Naive thymus-derived CD4-positive, alpha-beta T cell (primary cell): ENCODE measurements at regions of chr10 and their contacts with region 1.

Region 1: GRCh38 chr10:62528441-62528840 is 154.3 kb downstream of the ZNF365 start:
- DNase-seq: peak in 7 of 9 donors; percentile 42 to 83 (median 78)
- ATAC-seq: peak; percentile 95
- H3K4me3 ChIP-seq: no peak overlapping the region
- H3K4me3 Mint-ChIP-seq: peak overlapping the region; percentile 0 to 78 (median 70)
- H3K27ac ChIP-seq: peak overlapping the region; percentile 44
- H3K27ac Mint-ChIP-seq: peak overlapping the region; percentile 47 to 86 (median 75)
- H3K4me1 ChIP-seq: peaks cover 24 to 39% of the 10 kb centered on the region in 2 donors
- H3K4me1 Mint-ChIP-seq: peaks cover 32 to 49% (median 43%) of the 10 kb centered on the region in 7 donors
- H3K27me3 ChIP-seq: no peaks in the 10 kb centered on the region
- H3K27me3 Mint-ChIP-seq: peaks cover 0 to 15% (median 0%) of the 10 kb centered on the region in 5 donors

Region 2: DNA sequence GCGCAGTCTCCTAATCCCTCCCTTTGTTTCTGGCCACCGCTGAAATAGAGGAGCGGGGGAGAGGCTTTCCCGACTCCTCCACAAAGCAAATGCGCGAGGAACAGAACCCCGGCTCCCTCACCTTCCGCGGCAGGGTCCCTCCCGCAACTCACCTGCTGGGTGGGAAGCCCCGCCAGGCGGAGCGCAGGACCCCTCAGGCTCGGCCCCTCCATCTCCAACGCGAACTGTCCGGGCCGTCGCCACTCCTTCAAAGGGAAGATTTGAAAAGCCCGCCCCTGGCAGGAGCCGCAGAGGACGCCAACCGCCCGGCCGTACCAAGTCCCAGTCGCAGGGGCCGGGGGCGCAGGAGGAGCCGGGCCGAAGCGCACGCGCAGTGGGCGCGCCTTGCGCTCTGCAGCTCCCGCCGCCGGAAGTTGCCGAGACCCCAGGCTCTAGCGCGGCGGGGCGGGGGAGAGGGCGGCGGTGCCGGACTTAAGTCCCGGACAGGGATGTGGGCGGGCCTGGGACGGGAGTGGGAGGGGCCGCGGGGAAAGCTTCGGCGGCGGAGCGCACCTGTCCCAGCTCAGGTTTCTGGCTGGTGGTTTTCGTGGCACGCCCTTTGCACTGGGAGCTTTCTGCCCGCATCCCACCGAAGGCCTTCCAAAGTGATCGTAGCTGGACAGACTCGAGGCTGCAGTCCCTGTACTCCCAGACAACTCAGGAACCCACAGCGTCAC is 259.9 kb before region 1 on chr10 and contains the start of gene RTKN2:
- CTCF ChIA-PET with region 1: no interaction called
- POLR2A ChIA-PET with region 1: no interaction called
- intact Hi-C with region 1: loop called in 1 of 2 experiments (anchors 10 kb)
- DNase-seq: peak; percentile 52 to 76 (median 64)
- ATAC-seq: peak; percentile 89
- H3K4me3 ChIP-seq: peak within 1 kb of the TSS; percentile 69
- H3K4me3 Mint-ChIP-seq: peak within 1 kb of the TSS; percentile 84 to 96 (median 88)
- H3K27ac ChIP-seq: peak within 1 kb of the TSS; percentile 12
- H3K27ac Mint-ChIP-seq: peak within 1 kb of the TSS in 8 of 9 donors; percentile 8 to 75 (median 46)
- H3K4me1 ChIP-seq: peaks cover 0 to 5% of the 10 kb centered on the region in 2 donors
- H3K4me1 Mint-ChIP-seq: peaks cover 9 to 19% (median 14%) of the 10 kb centered on the region in 7 donors
- H3K27me3 ChIP-seq: peaks cover 0 to 9% of the 10 kb centered on the region in 2 donors
- H3K27me3 Mint-ChIP-seq: peaks cover 4 to 43% (median 16%) of the 10 kb centered on the region in 5 donors
- total RNA-seq, gene RTKN2: 1.4 to 7.8 (median 3.0) TPM

Region 3: GRCh38 chr10:62514079-62514693 is 14.3 kb before region 1 on chr10:
- CTCF ChIA-PET with region 1: no interaction called
- POLR2A ChIA-PET with region 1: no interaction called
- intact Hi-C with region 1: loop called in 1 of 2 experiments (anchors 2 kb)
- DNase-seq: no peak
- ATAC-seq: no peak
- H3K4me3 ChIP-seq: no peak overlapping the region
- H3K4me3 Mint-ChIP-seq: no peak overlapping the region
- H3K27ac ChIP-seq: no peak overlapping the region
- H3K27ac Mint-ChIP-seq: no peak overlapping the region
- H3K4me1 ChIP-seq: no peaks in the 10 kb centered on the region
- H3K4me1 Mint-ChIP-seq: peaks cover 0 to 9% (median 5%) of the 10 kb centered on the region in 7 donors
- H3K27me3 ChIP-seq: no peaks in the 10 kb centered on the region
- H3K27me3 Mint-ChIP-seq: peaks cover 0 to 23% (median 7%) of the 10 kb centered on the region in 5 donors

Region 4: GRCh38 chr10:62594093-62594520 is 65.7 kb after region 1 on chr10:
- CTCF ChIA-PET with region 1: no interaction called
- POLR2A ChIA-PET with region 1: no interaction called
- intact Hi-C with region 1: loop called in 1 of 2 experiments (anchors 2 kb)
- DNase-seq: peak in 8 of 9 donors; percentile 22 to 58 (median 40)
- ATAC-seq: peak; percentile 84
- H3K4me3 ChIP-seq: no peak overlapping the region
- H3K4me3 Mint-ChIP-seq: no peak overlapping the region
- H3K27ac ChIP-seq: no peak overlapping the region
- H3K27ac Mint-ChIP-seq: no peak overlapping the region
- H3K4me1 ChIP-seq: no peaks in the 10 kb centered on the region
- H3K4me1 Mint-ChIP-seq: peaks cover 0 to 4% (median 0%) of the 10 kb centered on the region in 7 donors
- H3K27me3 ChIP-seq: no peaks in the 10 kb centered on the region
- H3K27me3 Mint-ChIP-seq: peaks cover 0 to 26% (median 10%) of the 10 kb centered on the region in 5 donors

Region 5: DNA sequence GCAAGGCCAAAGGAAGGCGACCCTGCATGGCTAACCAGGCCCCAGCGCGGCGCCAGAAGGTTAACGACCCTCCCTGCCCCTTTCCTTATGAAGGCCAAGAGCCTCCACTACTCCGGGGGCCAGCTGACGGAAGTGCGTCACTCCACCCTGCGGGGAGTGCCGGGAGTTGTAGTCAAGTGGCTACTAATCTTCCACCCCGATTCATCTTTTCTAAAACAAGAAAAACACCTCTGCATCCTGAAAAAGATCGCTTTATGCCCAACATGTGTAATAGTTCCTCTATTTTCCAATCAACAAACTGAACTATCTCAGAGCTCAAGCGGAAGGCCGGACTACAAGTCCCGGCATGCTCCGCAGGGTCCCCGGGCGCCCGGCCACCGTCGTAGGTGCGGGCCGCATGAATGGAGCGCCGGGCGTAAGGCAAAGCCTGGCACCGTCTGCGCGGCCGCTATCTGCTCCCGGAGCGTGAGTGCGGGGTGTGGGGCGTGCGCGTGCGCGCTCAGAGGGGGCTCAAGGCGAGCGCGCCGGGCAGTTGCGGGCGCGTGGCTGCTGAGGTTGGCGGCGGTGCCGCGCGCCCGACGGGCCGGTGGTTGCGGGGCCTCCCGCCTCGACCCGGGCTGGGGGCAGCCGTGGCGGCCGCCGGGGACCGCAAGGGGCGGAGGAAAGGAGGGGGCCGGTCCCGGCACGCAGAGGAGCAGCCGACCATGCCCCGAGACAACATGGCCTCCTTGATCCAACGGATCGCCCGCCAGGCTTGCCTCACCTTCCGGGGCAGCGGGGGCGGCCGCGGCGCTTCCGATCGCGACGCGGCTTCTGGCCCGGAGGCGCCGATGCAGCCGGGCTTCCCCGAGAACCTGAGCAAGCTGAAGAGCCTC is 276.2 kb after region 1 on chr10 and contains the start of gene ADO:
- CTCF ChIA-PET with region 1: no interaction called
- POLR2A ChIA-PET with region 1: interaction called, 5 read pairs
- intact Hi-C with region 1: loop called in 1 of 2 experiments (anchors 5 kb)
- DNase-seq: peak; percentile 69 to 86 (median 80)
- ATAC-seq: peak; percentile 93
- H3K4me3 ChIP-seq: peak within 1 kb of the TSS; percentile 66
- H3K4me3 Mint-ChIP-seq: peak within 1 kb of the TSS; percentile 90 to 100 (median 96)
- H3K27ac ChIP-seq: peak within 1 kb of the TSS; percentile 86
- H3K27ac Mint-ChIP-seq: peak within 1 kb of the TSS; percentile 93 to 100 (median 98)
- H3K4me1 ChIP-seq: peaks cover 15 to 19% of the 10 kb centered on the region in 2 donors
- H3K4me1 Mint-ChIP-seq: peaks cover 22 to 47% (median 39%) of the 10 kb centered on the region in 7 donors
- H3K27me3 ChIP-seq: no peaks in the 10 kb centered on the region
- H3K27me3 Mint-ChIP-seq: peaks cover 0 to 20% (median 0%) of the 10 kb centered on the region in 5 donors
- total RNA-seq, gene ADO: 9.8 to 21.3 (median 15.6) TPM